Gastrocnemius medialis (tissue), 4 donors: ENCODE measurements at regions of chr15 and their contacts with region 1.

Region 1: GRCh38 chr15:29668120-29668602 is 154.1 kb downstream of the TJP1 start:
- DNase-seq: no peak
- ATAC-seq: no peak
- H3K4me3 ChIP-seq: no peak overlapping the region
- H3K27ac ChIP-seq: no peak overlapping the region
- H3K4me1 ChIP-seq: no peaks in the 10 kb centered on the region
- H3K27me3 ChIP-seq: no peaks in the 10 kb centered on the region
- CTCF ChIP-seq: peak; percentile 27 to 67 (median 50)
- POLR2A ChIP-seq: no peak

Region 2: DNA sequence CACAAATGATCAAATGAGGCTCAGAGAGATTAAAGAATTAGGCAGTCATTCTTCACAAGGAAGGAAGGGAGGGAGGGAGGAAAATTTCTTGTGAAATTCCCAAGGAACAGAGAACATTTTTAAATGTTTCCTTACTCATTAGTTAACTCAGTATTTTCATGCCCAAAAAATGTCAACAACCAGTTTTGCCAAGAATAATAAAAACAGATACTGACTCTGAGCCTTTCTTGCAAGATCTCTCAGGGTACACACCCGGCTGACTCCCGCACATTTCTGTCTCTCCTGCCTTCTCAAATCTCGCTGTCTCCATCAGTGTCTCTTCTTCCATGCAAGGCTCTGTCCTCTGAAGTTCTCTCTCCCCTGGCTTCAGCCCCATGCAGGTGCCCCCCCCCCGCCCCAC is 111.8 kb before region 1 on chr15:
- in situ Hi-C with region 1: no loop called
- intact Hi-C with region 1: no loop called
- DNase-seq: no peak
- ATAC-seq: no peak
- H3K4me3 ChIP-seq: no peak overlapping the region
- H3K27ac ChIP-seq: no peak overlapping the region
- H3K4me1 ChIP-seq: no peaks in the 10 kb centered on the region
- H3K27me3 ChIP-seq: no peaks in the 10 kb centered on the region
- CTCF ChIP-seq: no peak
- POLR2A ChIP-seq: no peak

Region 3: DNA sequence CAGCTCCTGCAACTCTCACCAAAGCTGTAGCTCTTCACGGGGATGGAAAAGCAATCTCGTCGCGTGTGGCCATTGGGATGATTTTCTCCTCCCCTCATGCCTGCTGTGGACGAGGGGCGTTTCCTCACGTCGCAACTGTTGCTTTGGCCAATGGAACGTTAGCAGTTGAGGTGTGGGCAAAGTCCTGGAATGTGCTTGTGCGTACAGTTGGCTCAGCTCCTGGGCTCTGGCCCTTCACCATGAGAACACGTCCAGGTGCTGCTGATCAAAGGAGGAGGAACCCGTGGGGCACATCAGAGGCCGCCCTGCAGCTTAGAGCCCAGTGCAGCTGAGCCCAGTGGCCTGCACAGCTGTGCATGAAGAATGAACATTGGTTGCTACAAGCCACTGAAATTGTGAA is 32.0 kb before region 1 on chr15:
- in situ Hi-C with region 1: no loop called
- intact Hi-C with region 1: no loop called
- DNase-seq: no peak
- ATAC-seq: no peak
- H3K4me3 ChIP-seq: no peak overlapping the region
- H3K27ac ChIP-seq: no peak overlapping the region
- H3K4me1 ChIP-seq: no peaks in the 10 kb centered on the region
- H3K27me3 ChIP-seq: peaks cover 0 to 4% (median 2%) of the 10 kb centered on the region in 3 donors
- CTCF ChIP-seq: no peak
- POLR2A ChIP-seq: no peak

Region 4: DNA sequence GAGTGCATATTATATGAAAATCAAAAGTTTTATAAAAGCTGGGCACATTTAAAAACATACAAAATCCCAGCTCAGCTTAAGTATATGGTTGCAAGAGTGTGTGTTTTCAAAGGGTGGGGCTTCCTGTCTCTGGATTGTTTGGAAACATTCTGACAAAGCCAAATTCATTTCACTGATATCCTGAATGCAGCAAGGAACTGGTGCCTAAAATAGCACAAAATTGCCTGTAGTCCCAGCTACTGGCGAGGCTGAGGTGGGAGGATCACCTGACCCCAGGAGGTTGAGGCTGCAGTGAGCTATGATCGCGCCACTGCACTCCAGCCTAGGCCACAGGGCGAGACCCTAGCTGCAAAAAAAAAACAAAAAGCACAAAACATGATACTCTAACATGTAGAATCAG is 167.1 kb after region 1 on chr15:
- in situ Hi-C with region 1: no loop called
- intact Hi-C with region 1: no loop called
- DNase-seq: no peak
- ATAC-seq: peak; percentile 36 to 58
- H3K4me3 ChIP-seq: no peak overlapping the region
- H3K27ac ChIP-seq: peak overlapping the region in 3 of 4 donors; percentile 56 to 64 (median 57)
- H3K4me1 ChIP-seq: peaks cover 3 to 4% of the 10 kb centered on the region in 2 donors
- H3K27me3 ChIP-seq: no peaks in the 10 kb centered on the region
- CTCF ChIP-seq: no peak
- POLR2A ChIP-seq: no peak

Region 5: DNA sequence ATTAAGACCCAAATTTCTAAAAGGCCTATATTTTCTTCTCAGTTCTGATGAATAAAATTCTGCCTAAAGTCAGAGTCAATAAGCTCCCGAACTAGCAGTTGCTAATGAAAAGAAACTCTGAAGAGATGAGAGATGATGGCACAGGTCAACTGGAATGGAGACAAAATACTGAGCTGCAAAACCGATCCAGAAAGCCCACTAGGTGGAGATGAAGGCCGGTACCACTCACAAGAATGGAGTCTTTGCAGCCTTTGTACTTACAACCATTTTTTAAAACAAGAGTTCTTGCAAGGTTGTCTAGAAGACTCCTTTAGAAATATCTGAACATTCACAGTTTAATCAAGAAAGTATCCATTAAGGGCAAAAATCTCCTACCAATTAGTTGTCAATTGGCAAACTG is 274.0 kb after region 1 on chr15:
- in situ Hi-C with region 1: no loop called
- intact Hi-C with region 1: loop called (anchors 10 kb)
- DNase-seq: no peak
- ATAC-seq: no peak
- H3K4me3 ChIP-seq: no peak overlapping the region
- H3K27ac ChIP-seq: no peak overlapping the region
- H3K4me1 ChIP-seq: no peaks in the 10 kb centered on the region
- H3K27me3 ChIP-seq: no peaks in the 10 kb centered on the region
- CTCF ChIP-seq: no peak
- POLR2A ChIP-seq: no peak

Region 6: DNA sequence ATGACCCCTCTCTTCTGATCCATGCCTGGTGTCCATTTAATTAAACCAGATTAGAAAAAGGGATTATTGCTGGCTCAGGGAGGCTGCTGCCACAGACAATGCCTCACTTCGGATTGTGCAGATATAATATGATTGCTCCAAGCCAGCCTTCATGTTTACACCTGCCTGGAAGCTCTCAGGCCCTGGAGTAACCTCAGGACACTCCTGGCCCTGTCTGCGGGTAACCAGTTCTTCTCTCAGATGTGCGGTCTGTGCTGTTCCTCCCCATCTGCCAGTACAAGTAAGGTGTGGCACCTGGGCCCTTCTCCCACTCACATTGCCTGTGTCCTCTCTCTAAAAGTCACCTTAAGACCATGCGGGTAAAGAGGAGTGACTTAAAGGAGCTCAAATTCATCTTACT is 405.8 kb after region 1 on chr15:
- in situ Hi-C with region 1: no loop called
- intact Hi-C with region 1: loop called (anchors 10 kb)
- DNase-seq: no peak
- ATAC-seq: no peak
- H3K4me3 ChIP-seq: no peak overlapping the region
- H3K27ac ChIP-seq: no peak overlapping the region
- H3K4me1 ChIP-seq: no peaks in the 10 kb centered on the region
- H3K27me3 ChIP-seq: peaks cover 0 to 2% (median 0%) of the 10 kb centered on the region in 3 donors
- CTCF ChIP-seq: no peak
- POLR2A ChIP-seq: no peak